Panc1 (cell line): ENCODE measurements at regions of chr11 and their contacts with region 1.

Region 1: GRCh38 chr11:1036303-1036923 is at the start of gene MUC6:
- DNase-seq: no peak
- ATAC-seq: peak; percentile 70
- H3K4me3 ChIP-seq: no peak within 1 kb of the TSS
- H3K27ac ChIP-seq: no peak within 1 kb of the TSS; the same call in 1 of the 2 replicates
- H3K4me1 ChIP-seq: peaks cover 38% of the 10 kb centered on the region
- H3K27me3 ChIP-seq: no peaks in the 10 kb centered on the region
- CTCF ChIP-seq: no peak
- total RNA-seq, gene MUC6: 0.49 TPM

Region 2: DNA sequence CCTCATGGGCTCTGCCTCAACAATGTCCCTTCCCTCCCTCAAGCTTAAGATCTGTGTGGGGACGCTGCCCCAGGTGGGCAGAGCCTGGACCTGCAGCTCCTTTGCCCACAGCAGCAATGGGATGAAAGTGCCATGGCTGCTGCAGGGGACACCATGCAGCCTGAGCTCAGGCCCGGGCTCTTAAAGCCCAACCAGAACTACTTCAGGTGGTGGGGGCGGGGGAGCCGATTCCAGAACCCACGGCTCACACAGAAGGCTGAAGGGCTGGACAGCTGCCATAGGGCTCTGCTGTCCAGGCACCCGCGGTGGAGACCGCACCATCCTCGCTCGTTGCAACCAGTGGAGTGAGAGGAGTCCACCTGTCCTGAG is 138.3 kb before region 1 on chr11:
- CTCF ChIA-PET with region 1: no interaction called
- POLR2A ChIA-PET with region 1: no interaction called
- in situ Hi-C with region 1: no loop called
- intact Hi-C with region 1: no loop called
- DNase-seq: no peak
- ATAC-seq: peak; percentile 77
- H3K4me3 ChIP-seq: no peak overlapping the region
- H3K27ac ChIP-seq: no peak overlapping the region
- H3K4me1 ChIP-seq: peaks cover 3% of the 10 kb centered on the region; the same call in 1 of the 2 replicates
- H3K27me3 ChIP-seq: no peaks in the 10 kb centered on the region
- CTCF ChIP-seq: peak; percentile 79; the same call in 1 of the 2 replicates

Region 3: GRCh38 chr11:1233716-1234365 is 197.4 kb after region 1 on chr11:
- CTCF ChIA-PET with region 1: no interaction called
- POLR2A ChIA-PET with region 1: interaction called, 21 read pairs
- in situ Hi-C with region 1: no loop called
- intact Hi-C with region 1: no loop called
- DNase-seq: no peak
- ATAC-seq: no peak
- H3K4me3 ChIP-seq: no peak overlapping the region
- H3K27ac ChIP-seq: no peak overlapping the region
- H3K4me1 ChIP-seq: peaks cover 6% of the 10 kb centered on the region; the same call in 1 of the 2 replicates
- H3K27me3 ChIP-seq: no peaks in the 10 kb centered on the region; the same call in 1 of the 2 replicates
- CTCF ChIP-seq: no peak

Region 4: DNA sequence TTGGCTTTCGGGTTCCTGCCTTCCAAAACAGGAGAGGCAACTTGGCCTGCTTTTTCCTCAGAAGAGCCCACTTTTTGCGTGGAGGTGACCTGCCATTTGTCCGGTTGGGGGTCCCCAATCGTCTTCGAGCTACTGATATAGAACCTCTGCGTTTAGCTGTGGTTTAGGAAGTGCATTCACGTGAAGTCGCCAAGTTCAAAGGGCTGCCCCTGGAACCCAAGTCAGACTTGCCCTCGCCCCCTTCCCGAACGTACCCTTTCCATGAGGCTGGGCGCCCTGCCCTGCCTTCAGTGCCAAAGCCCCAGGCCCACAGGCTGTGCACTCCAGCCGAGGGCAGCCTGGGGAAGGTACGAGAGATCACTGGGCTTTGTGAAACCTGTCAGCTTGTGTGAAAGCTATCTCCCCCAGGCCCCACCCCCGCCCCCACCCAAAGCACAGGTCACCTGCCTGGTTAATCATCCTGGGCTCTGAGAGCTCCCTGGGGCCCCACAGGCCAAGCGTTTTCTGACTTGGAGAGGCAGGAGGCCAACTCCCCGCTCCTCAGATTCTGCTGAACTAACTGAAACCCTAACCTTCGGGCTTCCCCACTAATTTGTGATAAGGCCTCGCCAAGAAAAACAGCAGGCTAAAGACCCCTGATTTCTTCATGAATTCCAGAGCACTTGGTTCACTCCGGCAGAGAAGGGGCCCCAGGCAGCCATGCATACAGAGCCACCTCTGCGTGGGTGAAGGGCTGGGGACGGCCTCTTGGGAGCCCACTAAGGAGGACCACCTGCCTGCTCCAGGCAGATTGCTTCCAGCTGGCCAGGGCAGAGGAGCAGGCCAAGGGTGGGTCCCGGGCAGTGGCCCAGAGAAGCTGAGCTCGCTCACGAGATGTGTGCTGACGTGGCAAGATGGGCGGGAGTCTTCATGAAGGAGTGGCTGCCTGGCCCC is 1689.2 kb after region 1 on chr11:
- CTCF ChIA-PET with region 1: no interaction called
- POLR2A ChIA-PET with region 1: no interaction called
- in situ Hi-C with region 1: no loop called
- intact Hi-C with region 1: no loop called
- DNase-seq: no peak
- ATAC-seq: no peak
- H3K4me3 ChIP-seq: no peak overlapping the region
- H3K27ac ChIP-seq: no peak overlapping the region
- H3K4me1 ChIP-seq: peaks cover 3% of the 10 kb centered on the region; the same call in 1 of the 2 replicates
- H3K27me3 ChIP-seq: no peaks in the 10 kb centered on the region
- CTCF ChIP-seq: no peak